ENCODE measurements at regions of chr10 and their contacts with region 1.

Region 1: DNA sequence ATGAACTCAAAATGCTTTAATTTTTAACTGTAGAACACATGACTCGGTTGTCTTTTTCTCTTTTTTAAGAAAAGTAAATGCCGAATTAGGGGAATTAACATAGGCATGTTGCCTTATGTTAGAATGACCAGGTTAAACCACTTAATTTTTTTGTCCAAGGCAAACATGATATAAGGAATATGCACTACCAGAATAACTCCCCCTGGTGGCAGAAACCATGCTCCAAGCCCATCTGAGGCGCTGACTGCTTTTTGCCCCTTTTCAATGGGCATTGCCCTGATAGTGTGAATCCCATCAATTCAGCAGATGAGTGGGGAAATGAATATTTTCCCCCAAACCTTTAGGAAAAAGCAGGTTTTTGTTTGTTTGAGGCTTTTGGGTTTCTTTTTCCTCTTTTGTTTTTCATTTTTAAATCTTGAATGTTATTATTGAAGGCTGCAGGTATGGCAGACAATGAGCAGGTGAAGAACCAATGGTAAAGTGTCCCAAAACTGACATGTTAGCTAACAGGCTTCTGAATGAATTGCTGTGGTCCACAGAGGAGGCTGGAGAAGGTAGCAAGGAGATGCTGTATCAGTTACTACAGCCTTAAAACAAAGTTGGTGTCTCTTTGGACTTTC is 284.3 kb downstream of the SORCS3 start:
- DNase-seq: peak; percentile 42 to 64
- H3K4me3 ChIP-seq: no peak overlapping the region
- H3K27ac ChIP-seq: no peak overlapping the region
- H3K4me1 ChIP-seq: no peaks in the 10 kb centered on the region
- H3K27me3 ChIP-seq: no peaks in the 10 kb centered on the region
- CTCF ChIP-seq: peak in 5 of 7 experiments; percentile 14 to 68 (median 39)
- EP300 ChIP-seq: no peak
- POLR2A ChIP-seq: no peak

Region 2: DNA sequence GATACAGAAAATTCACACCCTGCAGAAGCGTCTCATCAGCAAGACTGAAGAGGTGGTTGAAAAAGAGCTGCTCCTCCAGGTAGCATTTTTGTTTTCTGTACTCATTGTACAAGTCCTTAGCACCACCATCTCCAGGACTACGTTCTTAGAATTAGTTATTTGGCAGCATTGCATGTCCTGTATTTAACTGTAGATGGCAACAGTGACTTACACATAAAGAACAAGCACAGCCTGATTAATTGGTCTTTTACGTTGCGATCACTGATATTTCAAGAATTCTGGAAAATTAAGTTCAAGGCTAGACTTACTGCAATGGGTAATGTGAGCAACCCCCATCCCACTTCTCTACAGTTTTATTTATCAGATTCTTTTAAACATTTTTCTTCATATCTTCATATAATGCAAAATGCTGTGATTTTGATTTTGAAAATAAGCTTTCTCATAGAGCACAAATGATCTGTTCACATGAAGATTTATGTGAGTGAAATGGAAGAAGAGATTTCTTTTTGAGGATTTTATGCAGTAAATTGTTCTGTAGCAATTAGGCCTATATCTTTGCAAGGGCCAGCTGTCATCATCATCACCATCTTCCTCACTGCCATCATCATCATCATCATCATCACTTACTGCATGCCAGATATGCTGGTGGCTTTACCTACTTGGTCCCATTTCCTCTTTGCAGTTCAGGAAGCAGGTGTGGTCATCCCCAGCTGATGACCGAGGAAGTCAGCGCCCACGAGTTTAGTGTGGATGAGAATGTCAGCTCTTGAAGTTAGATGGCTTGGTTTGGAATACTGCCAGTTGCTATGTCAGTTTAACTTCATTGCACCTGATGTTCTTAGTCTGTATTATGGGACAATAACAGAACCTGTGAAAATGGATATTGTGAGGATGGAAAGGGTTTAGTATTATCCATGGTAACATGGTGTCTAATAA is 518.4 kb before region 1 on chr10:
- intact Hi-C with region 1: loop called (anchors 10 kb)
- DNase-seq: peak in 1 of 2 donors; percentile 66
- H3K4me3 ChIP-seq: no peak overlapping the region
- H3K27ac ChIP-seq: no peak overlapping the region
- H3K4me1 ChIP-seq: peaks cover 0 to 13% (median 3%) of the 10 kb centered on the region in 4 donors
- H3K27me3 ChIP-seq: no peaks in the 10 kb centered on the region
- CTCF ChIP-seq: peak in 5 of 7 experiments; percentile 25 to 48 (median 42)
- EP300 ChIP-seq: no peak
- POLR2A ChIP-seq: no peak

Measured in stomach (tissue), 19 donors.